ENCODE measurements at regions of chr2 and their contacts with region 1.

Region 1: DNA sequence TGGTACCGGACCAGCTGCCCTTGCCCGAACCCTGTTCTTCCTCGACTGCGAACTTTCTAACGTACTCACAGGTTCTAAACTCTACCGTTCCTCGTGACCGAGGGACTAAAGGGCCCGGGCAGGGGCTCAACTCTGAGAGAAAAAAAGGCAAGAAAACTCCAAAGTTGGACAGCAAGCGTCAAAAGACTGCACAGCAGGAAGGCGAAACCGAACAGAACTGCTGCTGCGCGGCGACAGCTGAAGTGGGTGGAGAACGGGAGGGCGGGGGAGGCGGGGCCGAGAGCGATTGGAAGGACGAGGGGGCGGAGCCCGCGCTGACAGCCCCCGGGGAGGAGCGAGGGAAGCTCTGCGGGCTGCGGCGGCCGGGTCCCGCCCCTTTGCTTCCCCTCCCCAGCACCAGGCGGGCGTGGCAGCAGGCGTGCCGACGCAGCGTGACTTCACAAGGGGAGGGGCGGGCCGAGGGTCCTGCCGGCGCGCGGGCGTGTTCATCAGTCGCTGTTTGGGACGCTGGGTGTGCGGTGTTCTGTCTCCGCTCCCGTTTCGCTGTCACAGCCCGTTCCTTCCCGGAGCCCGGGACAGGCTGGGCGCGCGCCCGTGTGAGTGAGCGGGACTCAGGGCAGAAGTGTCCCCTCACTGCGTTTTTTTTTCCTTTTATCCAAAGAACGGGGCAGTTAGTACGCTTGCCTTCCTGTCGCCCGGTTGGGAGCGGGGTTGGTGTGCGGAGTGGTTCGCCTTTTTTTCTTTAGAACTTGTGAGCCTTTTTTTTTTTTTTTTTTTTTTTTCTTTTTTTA is at the start of gene NABP1:
- DNase-seq: peak; percentile 99
- H3K4me3 Mint-ChIP-seq: peak within 1 kb of the TSS; percentile 96
- H3K27ac Mint-ChIP-seq: peak within 1 kb of the TSS; percentile 99
- H3K4me1 Mint-ChIP-seq: peaks cover 46% of the 10 kb centered on the region
- H3K27me3 Mint-ChIP-seq: peaks cover 2% of the 10 kb centered on the region
- total RNA-seq, gene NABP1: 65.1 to 65.4 TPM

Region 2: GRCh38 chr2:190843874-190844699 is 833.8 kb before region 1 on chr2:
- CTCF ChIA-PET with region 1: no interaction called
- POLR2A ChIA-PET with region 1: no interaction called
- intact Hi-C with region 1: loop called (anchors 2 kb)
- DNase-seq: peak; percentile 78
- H3K4me3 Mint-ChIP-seq: peak overlapping the region; percentile 30
- H3K27ac Mint-ChIP-seq: peak overlapping the region; percentile 92
- H3K4me1 Mint-ChIP-seq: peaks cover 39% of the 10 kb centered on the region
- H3K27me3 Mint-ChIP-seq: peaks cover 1% of the 10 kb centered on the region

Region 3: DNA sequence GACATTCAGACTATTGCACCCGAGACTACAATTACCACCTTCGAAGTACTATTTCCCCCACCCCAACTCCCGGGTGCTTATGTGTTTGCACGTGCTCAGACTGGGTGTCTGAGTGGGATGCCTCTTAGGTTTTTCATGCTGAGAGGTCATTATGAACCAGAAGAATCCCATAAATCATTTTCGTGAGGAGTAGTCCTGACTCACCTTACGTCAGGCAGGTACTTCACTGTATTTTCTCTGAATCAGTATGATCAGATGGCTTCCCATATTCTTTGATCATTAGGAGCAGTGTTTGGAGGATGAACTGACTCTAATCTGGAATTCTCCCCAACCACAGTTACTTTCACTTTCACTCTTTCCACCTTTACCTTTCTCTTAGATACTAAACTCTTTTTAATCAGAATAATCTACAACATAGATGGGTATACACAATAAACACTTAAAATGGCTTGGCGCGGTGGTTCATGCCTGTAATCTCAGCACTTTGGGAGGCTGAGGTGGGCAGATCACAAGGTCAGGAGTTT is 488.7 kb before region 1 on chr2:
- CTCF ChIA-PET with region 1: interaction called, 3 read pairs
- POLR2A ChIA-PET with region 1: no interaction called
- intact Hi-C with region 1: loop called (anchors 1 kb)
- DNase-seq: no peak
- H3K4me3 Mint-ChIP-seq: peak overlapping the region; percentile 27
- H3K27ac Mint-ChIP-seq: peak overlapping the region; percentile 10
- H3K4me1 Mint-ChIP-seq: peaks cover 58% of the 10 kb centered on the region
- H3K27me3 Mint-ChIP-seq: no peaks in the 10 kb centered on the region

Region 4: GRCh38 chr2:191625016-191625415 is 52.8 kb before region 1 on chr2:
- CTCF ChIA-PET with region 1: interaction called, 4 read pairs
- POLR2A ChIA-PET with region 1: interaction called, 35 read pairs
- intact Hi-C with region 1: loop called (anchors 1 kb)
- DNase-seq: peak; percentile 75
- H3K4me3 Mint-ChIP-seq: peak overlapping the region; percentile 35
- H3K27ac Mint-ChIP-seq: peak overlapping the region; percentile 89
- H3K4me1 Mint-ChIP-seq: peaks cover 84% of the 10 kb centered on the region
- H3K27me3 Mint-ChIP-seq: no peaks in the 10 kb centered on the region

Region 5: GRCh38 chr2:191666732-191667131 is 11.1 kb before region 1 on chr2:
- CTCF ChIA-PET with region 1: no interaction called
- POLR2A ChIA-PET with region 1: interaction called, 8 read pairs
- intact Hi-C with region 1: loop called (anchors 1 kb)
- DNase-seq: no peak
- H3K4me3 Mint-ChIP-seq: no peak overlapping the region
- H3K27ac Mint-ChIP-seq: no peak overlapping the region
- H3K4me1 Mint-ChIP-seq: peaks cover 20% of the 10 kb centered on the region
- H3K27me3 Mint-ChIP-seq: no peaks in the 10 kb centered on the region